Mammary epithelial cell (primary cell): ENCODE measurements at regions of chr3 and their contacts with region 1.

Region 1: DNA sequence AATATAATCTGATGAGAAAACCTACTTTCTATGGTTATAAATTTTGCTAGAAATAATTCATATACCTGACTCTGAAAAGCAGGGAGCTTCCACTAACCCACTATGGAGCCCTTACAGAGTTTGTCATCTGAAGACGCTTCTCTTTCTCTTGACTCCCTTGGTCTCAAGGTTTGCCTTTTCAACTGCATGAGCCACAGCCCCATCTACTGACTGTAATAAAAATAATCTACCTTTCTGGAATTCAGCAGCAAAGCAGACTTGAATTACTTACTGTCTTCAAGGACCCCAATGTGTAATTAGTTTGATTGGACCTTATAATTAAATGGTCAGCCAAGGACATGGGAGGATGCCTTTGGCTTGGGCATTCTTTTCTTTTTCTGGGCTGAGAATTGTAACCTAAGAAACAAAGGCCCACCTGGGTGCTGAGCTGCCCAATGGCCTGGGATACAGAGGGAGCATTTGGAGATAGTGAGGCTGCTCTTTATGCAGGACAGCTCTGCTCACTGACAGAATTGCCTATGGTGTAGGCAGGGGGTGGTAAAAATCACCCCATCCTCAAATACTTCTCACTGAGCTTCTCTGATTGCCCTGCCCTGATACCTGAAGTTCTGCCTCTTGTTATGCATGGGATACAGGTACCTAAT is 178.6 kb upstream of the TRIM42 start:
- DNase-seq: peak; percentile 26
- H3K4me3 ChIP-seq: no peak overlapping the region
- H3K27ac ChIP-seq: no peak overlapping the region
- H3K4me1 ChIP-seq: no peaks in the 10 kb centered on the region
- H3K27me3 ChIP-seq: no peaks in the 10 kb centered on the region
- CTCF ChIP-seq: peak; percentile 21 to 64

Region 2: GRCh38 chr3:140128631-140129030 is 370.6 kb before region 1 on chr3:
- CTCF ChIA-PET with region 1: no interaction called
- dilution Hi-C with region 1: no loop called
- in situ Hi-C with region 1: no loop called
- intact Hi-C with region 1: loop called (anchors 1 kb)
- DNase-seq: peak; percentile 8
- H3K4me3 ChIP-seq: no peak overlapping the region
- H3K27ac ChIP-seq: no peak overlapping the region
- H3K4me1 ChIP-seq: no peaks in the 10 kb centered on the region
- H3K27me3 ChIP-seq: no peaks in the 10 kb centered on the region
- CTCF ChIP-seq: peak; percentile 27 to 59

Region 3: DNA sequence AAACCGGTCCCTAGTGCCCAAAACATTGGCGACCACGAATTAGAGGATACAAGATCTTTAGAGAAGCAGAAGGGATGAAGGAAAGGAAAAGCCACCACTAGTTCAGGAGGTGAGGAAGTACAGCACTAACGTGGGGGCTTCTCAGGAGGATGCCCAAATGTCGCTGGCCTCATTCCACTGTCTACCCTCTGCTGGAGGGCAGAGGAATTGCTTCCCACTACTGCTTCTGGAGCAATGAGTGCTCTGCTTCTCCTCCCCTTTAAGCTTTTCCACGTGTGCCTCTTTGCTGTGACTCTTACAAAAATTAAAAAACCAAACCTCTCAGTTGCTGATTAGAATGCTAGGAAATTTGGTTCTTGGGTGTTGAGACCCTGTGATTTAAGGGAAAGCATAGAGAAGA is 283.0 kb before region 1 on chr3:
- CTCF ChIA-PET with region 1: no interaction called
- dilution Hi-C with region 1: no loop called
- in situ Hi-C with region 1: no loop called
- intact Hi-C with region 1: loop called (anchors 10 kb)
- DNase-seq: peak; percentile 4
- H3K4me3 ChIP-seq: no peak overlapping the region
- H3K27ac ChIP-seq: no peak overlapping the region
- H3K4me1 ChIP-seq: no peaks in the 10 kb centered on the region
- H3K27me3 ChIP-seq: peaks cover 5% of the 10 kb centered on the region
- CTCF ChIP-seq: peak; percentile 70 to 84

Region 4: GRCh38 chr3:140276703-140277102 is 222.5 kb before region 1 on chr3:
- CTCF ChIA-PET with region 1: no interaction called
- dilution Hi-C with region 1: no loop called
- in situ Hi-C with region 1: no loop called
- intact Hi-C with region 1: loop called (anchors 5 kb)
- DNase-seq: peak; percentile 20
- H3K4me3 ChIP-seq: no peak overlapping the region
- H3K27ac ChIP-seq: no peak overlapping the region
- H3K4me1 ChIP-seq: peaks cover 9% of the 10 kb centered on the region
- H3K27me3 ChIP-seq: peaks cover 6% of the 10 kb centered on the region
- CTCF ChIP-seq: peak; percentile 43 to 60

Region 5: DNA sequence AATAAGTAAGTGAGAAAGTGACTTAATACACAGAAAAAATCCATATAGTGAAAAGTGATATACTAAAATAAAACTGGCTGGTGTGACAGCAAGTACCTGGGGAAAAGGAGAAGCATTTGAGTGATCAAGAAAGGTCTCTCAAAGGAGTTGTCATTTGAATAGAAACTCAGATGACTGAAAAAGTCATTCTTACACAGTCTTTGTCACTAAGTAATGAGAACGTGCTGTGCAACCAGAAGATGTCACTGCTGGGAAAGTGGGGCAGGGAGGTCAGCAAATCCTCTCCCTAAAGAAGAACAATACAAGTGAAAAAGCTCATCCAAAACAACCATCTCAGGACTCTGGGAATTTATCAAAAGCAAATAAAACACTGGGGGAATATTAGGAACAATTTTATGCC is 138.9 kb before region 1 on chr3:
- CTCF ChIA-PET with region 1: no interaction called
- dilution Hi-C with region 1: no loop called
- in situ Hi-C with region 1: no loop called
- intact Hi-C with region 1: loop called (anchors 1 kb)
- DNase-seq: no peak
- H3K4me3 ChIP-seq: no peak overlapping the region
- H3K27ac ChIP-seq: no peak overlapping the region
- H3K4me1 ChIP-seq: no peaks in the 10 kb centered on the region
- H3K27me3 ChIP-seq: no peaks in the 10 kb centered on the region
- CTCF ChIP-seq: peak in 1 of 2 donors; percentile 35

Region 6: GRCh38 chr3:140736863-140737460 is 237.7 kb after region 1 on chr3:
- CTCF ChIA-PET with region 1: no interaction called
- dilution Hi-C with region 1: no loop called
- in situ Hi-C with region 1: no loop called
- intact Hi-C with region 1: loop called (anchors 2 kb)
- DNase-seq: peak; percentile 36
- H3K4me3 ChIP-seq: no peak overlapping the region
- H3K27ac ChIP-seq: no peak overlapping the region
- H3K4me1 ChIP-seq: no peaks in the 10 kb centered on the region
- H3K27me3 ChIP-seq: peaks cover 13% of the 10 kb centered on the region
- CTCF ChIP-seq: peak; percentile 47 to 64